ENCODE measurements at regions of chr19 and their contacts with region 1.

Region 1: GRCh38 chr19:796692-797527 is at the start of gene PTBP1:
- DNase-seq: peak; percentile 100
- H3K4me3 ChIP-seq: peak within 1 kb of the TSS; percentile 76 to 100 (median 96)
- H3K27ac ChIP-seq: peak within 1 kb of the TSS; percentile 93 to 100 (median 97)
- H3K4me1 ChIP-seq: peaks cover 0 to 51% (median 48%) of the 10 kb centered on the region in 4 donors
- H3K27me3 ChIP-seq: no peaks in the 10 kb centered on the region
- CTCF ChIP-seq: no peak
- EP300 ChIP-seq: no peak
- POLR2A ChIP-seq: no peak
- total RNA-seq, gene PTBP1: 53.8 to 94.5 (median 71.7) TPM

Region 2: DNA sequence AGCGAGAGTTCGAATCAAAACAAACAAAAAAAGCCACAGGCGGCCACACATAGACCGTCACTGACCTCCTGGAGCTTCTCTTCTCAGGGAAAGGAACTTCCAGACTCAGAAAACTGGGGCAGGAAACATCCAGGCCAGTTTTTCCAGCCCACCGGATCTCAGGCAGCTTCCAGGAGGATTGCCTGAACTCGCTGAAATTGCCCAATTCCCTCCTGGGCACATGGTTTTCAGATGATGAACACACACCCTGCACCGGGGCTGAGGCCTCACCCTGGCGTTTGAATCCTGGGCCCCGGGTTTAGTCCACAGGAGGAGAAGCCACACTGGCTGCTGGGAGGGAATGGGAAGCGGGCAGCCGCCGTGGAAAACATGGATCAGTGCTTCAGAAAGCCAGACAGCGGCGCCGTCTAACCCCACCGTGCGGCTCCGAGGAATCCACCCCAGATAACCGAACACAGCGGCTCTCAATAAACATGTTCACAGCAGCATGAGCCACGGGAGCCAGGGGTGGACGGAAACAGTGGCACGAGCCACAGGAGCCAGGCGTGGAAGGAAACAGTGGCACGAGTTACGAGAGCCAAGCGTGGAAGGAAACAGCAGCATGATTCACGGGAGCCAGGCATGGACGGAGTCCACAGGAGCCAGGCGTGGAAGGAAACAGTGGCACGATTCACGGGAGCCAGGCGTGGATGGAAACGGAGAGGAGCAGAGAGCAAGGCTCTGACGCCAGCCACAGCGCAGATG is 17.8 kb before region 1 on chr19:
- intact Hi-C with region 1: no loop called
- DNase-seq: peak; percentile 84
- H3K4me3 ChIP-seq: no peak overlapping the region
- H3K27ac ChIP-seq: peak overlapping the region in 2 of 4 donors; percentile 31 to 43
- H3K4me1 ChIP-seq: peaks cover 0 to 5% (median 0%) of the 10 kb centered on the region in 4 donors
- H3K27me3 ChIP-seq: peaks cover 0 to 21% (median 0%) of the 10 kb centered on the region in 3 donors
- CTCF ChIP-seq: no peak
- EP300 ChIP-seq: no peak
- POLR2A ChIP-seq: no peak

Region 3: DNA sequence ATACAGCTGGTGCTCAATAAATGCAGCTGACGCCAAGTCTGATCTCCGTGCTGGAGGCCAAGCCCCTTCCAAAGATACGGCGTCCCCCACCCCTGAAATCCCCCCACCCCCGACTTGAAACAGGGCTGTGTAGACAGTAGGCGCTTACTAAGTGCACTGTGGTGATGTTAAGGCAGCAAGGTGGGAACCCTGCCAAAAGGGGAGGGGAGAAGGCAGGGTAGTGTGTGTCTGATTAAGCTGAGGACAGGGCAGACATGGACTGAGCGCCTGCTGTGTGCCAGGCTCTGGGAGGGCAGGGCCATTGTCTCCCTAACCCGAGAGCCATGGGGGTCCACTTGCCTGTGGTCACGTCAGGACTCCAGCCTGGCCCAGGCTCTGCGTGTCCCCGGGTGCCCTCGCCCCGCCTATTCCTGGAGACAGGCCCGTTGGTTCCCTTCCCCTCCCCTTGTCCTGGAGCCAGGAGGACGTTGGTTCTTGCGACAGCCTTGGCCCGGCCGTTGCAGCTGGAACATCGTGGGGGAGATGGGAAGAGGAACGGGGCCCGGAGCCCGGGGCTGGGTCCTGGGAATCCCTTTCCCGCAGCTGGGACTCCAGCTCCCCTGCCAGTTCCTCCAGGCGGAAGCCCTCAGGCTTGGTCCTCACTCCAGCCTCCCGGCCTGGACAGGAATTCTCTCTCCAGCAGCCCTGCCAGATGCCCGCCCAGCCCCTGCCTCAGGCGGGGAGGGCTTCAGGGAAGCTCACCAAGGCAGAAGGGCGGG is 53.5 kb after region 1 on chr19:
- intact Hi-C with region 1: loop called (anchors 5 kb)
- DNase-seq: peak; percentile 98
- H3K4me3 ChIP-seq: peak overlapping the region in 3 of 4 donors; percentile 3 to 30 (median 16)
- H3K27ac ChIP-seq: peak overlapping the region; percentile 77 to 83 (median 79)
- H3K4me1 ChIP-seq: peaks cover 0 to 45% (median 32%) of the 10 kb centered on the region in 4 donors
- H3K27me3 ChIP-seq: peaks cover 15 to 69% (median 42%) of the 10 kb centered on the region in 3 donors
- CTCF ChIP-seq: no peak
- EP300 ChIP-seq: peak in 3 of 4 donors; percentile 62 to 80 (median 69)
- POLR2A ChIP-seq: no peak

Region 4: DNA sequence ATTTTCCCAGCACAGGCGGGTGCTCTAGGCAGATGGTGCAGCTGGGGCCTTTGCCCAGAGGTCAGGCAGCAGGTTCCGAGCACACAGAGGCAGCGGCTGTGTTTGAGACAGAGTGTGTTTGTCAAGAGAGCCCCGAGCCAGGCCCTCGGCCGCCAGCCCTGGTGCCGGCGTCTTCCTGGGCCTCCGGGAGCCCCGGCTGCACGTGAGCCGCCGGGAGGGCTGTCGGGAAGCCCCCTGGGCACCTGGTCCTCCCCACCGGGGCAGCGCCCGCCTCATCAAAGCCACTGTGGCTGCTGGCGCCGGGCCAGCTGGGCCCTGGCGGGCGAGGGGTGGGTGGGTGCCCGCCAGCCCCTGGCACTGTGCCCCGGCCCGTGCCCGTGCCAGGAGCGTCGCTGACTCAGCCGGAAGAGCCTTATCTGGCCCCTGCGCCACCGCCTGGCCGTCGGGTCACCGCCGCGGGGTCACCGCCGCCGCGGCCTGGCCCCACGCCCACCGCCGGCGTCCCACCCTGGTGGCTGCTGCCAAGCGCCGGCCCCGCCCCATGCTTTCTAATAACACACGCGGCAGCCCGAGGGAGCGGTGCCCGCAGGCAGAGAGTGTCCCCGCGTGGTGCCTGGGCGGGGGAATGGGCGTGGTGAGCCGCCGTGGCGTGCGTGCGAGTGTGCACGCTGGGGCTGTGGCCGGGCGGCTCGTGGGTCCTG is 143.8 kb after region 1 on chr19:
- intact Hi-C with region 1: no loop called
- DNase-seq: peak; percentile 87
- H3K4me3 ChIP-seq: peak overlapping the region; percentile 0 to 42 (median 36)
- H3K27ac ChIP-seq: peak overlapping the region; percentile 79 to 92 (median 84)
- H3K4me1 ChIP-seq: peaks cover 0 to 47% (median 21%) of the 10 kb centered on the region in 4 donors
- H3K27me3 ChIP-seq: no peaks in the 10 kb centered on the region
- CTCF ChIP-seq: no peak
- EP300 ChIP-seq: no peak
- POLR2A ChIP-seq: no peak